Mammary epithelial cell (primary cell): ENCODE measurements at regions of chr16 and their contacts with region 1.

Region 1: DNA sequence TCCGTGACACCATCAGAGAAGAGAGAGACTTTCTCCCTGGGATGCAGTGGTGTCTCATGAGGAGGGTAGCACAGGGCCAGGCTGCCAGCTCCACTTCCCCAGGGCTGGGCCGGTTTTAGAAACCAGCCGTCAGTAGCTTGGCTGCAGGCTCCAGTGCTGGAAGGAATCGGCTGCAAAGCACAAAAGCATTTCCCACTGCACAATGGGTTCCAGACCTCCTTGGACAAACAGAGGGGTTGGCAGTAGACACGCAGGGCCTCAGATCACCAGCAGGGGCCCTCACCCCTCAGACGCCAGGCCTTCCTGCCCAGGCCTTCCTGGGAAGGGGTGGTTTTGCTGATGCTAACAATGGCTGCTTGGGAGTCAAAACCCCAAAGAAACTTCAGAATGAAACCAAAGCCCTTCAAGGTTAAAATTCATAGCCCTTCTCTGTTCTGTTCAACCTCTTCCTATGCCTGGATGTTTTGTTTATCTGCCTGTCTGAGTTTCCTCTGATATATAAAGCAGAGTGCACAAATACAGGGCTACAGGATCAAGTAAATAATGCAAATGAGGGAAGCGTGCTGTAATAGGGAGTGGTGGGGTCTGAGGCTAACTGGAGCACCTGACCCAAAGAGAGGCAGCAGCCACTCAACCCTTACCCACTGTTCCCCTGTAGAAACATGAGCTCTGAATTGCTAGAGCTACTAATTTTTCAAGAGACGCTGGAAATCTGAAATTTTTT is 26.2 kb downstream of the TEKT5 start:
- DNase-seq: no peak
- H3K4me3 ChIP-seq: no peak overlapping the region
- H3K27ac ChIP-seq: no peak overlapping the region
- H3K4me1 ChIP-seq: no peaks in the 10 kb centered on the region
- H3K27me3 ChIP-seq: no peaks in the 10 kb centered on the region
- CTCF ChIP-seq: peak; percentile 62 to 73

Region 2: DNA sequence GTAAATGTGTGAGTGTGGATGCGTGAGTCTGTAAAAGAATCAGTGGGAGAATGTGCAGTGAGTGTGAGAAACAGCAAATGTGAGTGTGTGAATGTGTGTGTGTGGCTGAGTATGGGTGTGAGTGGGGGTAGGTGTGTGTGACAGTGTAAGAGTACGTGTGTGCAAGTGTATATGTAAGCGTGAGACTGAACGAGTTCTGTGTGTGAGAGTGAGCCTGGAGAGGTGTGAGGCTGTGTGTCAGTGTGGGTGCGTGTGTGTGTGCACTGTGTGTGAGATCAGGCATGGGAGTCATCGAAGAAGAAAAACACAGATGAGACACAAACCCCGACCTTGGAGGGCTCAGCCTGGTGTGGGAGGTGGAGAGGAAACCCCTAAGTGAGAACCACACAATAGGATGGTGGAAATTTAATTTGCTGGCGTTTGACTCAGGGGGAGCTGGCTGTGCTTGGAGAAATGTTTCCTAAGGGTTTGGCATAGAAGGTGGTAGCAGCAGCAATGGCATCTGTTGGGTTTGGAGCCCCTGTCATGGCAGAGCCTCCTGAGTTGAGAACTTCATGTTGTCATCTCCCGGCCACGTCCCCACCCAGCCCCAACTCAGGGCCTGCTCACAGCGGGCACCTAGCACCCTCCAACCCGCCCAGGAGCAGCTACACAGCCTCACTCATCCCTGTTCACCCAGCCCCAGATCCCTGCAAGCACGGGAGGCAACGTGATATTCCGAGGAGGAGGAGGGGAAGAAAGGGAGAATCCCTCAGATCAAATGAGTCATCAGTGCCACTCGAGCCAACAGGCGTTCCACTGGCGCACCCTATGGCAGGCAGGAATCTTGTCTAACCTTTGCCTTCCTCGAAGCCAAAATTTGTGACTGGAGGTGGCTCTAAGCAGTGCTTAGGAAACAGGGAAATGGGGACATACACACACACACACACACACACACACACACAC is 60.9 kb after region 1 on chr16:
- CTCF ChIA-PET with region 1: no interaction called
- dilution Hi-C with region 1: no loop called
- in situ Hi-C with region 1: no loop called
- intact Hi-C with region 1: loop called (anchors 2 kb)
- DNase-seq: peak; percentile 60
- H3K4me3 ChIP-seq: no peak overlapping the region
- H3K27ac ChIP-seq: no peak overlapping the region
- H3K4me1 ChIP-seq: peaks cover 4% of the 10 kb centered on the region
- H3K27me3 ChIP-seq: no peaks in the 10 kb centered on the region
- CTCF ChIP-seq: no peak